ENCODE measurements at regions of chr7 and their contacts with region 1.

Region 1: GRCh38 chr7:38215735-38216670 is 38.0 kb downstream of the STARD3NL start:
- DNase-seq: peak; percentile 81
- ATAC-seq: peak; percentile 92
- H3K4me3 Mint-ChIP-seq: no peak overlapping the region
- H3K27ac Mint-ChIP-seq: peak overlapping the region; percentile 57
- H3K4me1 Mint-ChIP-seq: peaks cover 41% of the 10 kb centered on the region
- H3K27me3 Mint-ChIP-seq: no peaks in the 10 kb centered on the region; the same call in 1 of the 2 replicates
- CTCF ChIP-seq: peak; percentile 94

Region 2: GRCh38 chr7:37916673-37917660 is 299.0 kb before region 1 on chr7 and contains the start of gene SFRP4:
- CTCF ChIA-PET with region 1: interaction called, 19 read pairs
- POLR2A ChIA-PET with region 1: no interaction called
- DNase-seq: peak; percentile 64
- ATAC-seq: peak; percentile 42
- H3K4me3 Mint-ChIP-seq: peak within 1 kb of the TSS; percentile 78
- H3K27ac Mint-ChIP-seq: no peak within 1 kb of the TSS
- H3K4me1 Mint-ChIP-seq: peaks cover 16% of the 10 kb centered on the region
- H3K27me3 Mint-ChIP-seq: peaks cover 84% of the 10 kb centered on the region
- CTCF ChIP-seq: no peak
- total RNA-seq, gene SFRP4: 0.07 to 0.24 TPM (median 0.09 TPM) in 3 replicates

Region 3: DNA sequence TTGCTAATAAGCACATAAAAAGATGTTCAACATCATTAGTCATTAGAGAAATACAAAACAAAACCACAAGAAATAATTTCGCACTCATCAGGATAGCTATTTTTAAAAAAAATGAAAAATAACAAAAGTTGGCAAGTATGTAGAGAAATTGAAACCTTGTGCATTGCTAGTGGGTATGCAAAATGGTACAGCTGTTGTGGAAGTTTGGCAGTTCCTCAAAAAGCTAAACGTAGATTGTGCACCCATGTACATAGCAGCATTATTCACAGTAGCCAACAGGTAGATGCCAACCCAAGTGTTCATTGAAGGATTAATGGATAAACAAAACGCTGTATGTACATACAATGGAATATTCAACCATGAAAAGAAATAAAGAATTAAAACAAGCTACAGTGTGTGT is 73.3 kb before region 1 on chr7:
- CTCF ChIA-PET with region 1: no interaction called
- POLR2A ChIA-PET with region 1: no interaction called
- DNase-seq: no peak
- ATAC-seq: no peak
- H3K4me3 Mint-ChIP-seq: no peak overlapping the region
- H3K27ac Mint-ChIP-seq: no peak overlapping the region
- H3K4me1 Mint-ChIP-seq: peaks cover 5% of the 10 kb centered on the region; the same call in 1 of the 2 replicates
- H3K27me3 Mint-ChIP-seq: no peaks in the 10 kb centered on the region
- CTCF ChIP-seq: no peak

Region 4: DNA sequence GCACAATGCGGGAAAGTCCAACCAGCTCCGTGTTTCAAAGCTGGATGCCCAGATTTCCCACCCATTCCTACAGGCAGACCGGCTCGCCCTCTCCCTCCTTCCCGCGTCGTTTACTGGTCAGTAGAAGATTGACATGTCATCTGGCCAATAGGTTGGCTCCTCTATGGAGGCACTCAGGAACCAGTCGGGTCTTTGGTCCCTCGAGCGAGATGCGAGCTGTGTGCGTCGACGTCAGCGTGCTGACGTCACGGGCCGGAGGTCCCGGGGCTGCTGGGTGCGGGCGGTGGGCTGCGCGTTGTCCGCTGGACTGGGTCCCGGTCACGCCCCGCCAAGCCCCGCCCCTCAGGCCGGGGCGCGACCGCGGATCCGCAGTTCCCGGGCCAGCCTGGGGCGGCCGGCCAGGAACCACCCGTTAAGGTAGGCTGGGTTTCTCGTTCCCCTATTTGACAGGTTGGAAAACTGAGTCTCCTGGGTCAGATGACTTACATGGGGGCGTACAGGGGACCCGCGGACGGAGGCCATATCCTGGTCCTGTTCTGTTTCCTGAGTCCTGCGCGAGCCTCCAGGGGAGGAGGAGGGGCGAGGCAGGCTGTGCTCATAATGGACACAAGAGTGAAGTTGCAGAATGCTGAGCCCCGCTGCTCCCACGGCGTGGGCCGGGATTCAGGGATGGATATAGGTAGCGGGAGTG is 37.9 kb before region 1 on chr7 and contains the start of gene STARD3NL:
- CTCF ChIA-PET with region 1: interaction called, 19 read pairs
- POLR2A ChIA-PET with region 1: interaction called, 3 read pairs
- DNase-seq: peak; percentile 94
- ATAC-seq: peak; percentile 99
- H3K4me3 Mint-ChIP-seq: peak within 1 kb of the TSS; percentile 91
- H3K27ac Mint-ChIP-seq: peak within 1 kb of the TSS; percentile 98
- H3K4me1 Mint-ChIP-seq: peaks cover 18% of the 10 kb centered on the region
- H3K27me3 Mint-ChIP-seq: peaks cover 13% of the 10 kb centered on the region
- CTCF ChIP-seq: no peak
- total RNA-seq, gene STARD3NL: 30.6 to 33.1 TPM (median 32.2 TPM) in 3 replicates

Region 5: DNA sequence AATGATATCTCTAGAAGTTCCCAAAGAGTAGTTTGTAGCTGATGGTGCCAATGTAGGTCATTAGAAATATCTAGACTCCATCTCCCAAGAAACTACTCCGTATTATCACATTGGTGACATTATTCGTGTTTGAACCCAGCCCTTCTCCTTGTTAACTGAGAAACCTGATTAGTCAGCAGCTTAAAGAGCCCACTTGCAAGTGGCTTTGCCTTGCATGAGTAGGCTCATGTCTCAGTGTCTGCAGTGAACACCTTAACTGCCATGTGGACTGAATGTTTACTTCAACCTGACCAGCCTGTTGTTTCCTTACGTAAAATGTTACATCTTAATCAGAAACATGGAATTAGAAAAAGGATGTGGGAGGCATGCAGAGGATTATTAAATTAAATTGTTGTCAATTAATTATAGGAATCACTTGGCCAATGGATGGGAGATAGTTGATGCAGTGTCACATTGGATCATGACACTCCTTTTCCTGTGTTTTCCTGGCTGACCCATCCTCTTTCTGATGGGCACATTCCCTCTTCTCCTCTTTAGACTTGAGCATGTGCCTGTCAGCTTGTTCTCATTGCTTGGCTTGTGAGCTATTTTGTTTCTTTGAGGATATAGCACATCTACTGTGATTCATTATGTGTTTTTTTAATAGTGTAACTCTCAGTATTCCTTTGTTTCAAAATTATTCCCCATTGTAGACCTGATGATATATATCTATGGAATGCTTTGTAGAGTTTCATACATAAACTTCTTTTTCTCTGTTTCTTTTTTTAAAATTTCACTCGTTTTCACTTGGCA is 20.0 kb before region 1 on chr7:
- CTCF ChIA-PET with region 1: interaction called, 51 read pairs
- POLR2A ChIA-PET with region 1: no interaction called
- DNase-seq: no peak
- ATAC-seq: no peak
- H3K4me3 Mint-ChIP-seq: no peak overlapping the region
- H3K27ac Mint-ChIP-seq: no peak overlapping the region
- H3K4me1 Mint-ChIP-seq: peaks cover 40% of the 10 kb centered on the region
- H3K27me3 Mint-ChIP-seq: no peaks in the 10 kb centered on the region
- CTCF ChIP-seq: no peak

Region 6: GRCh38 chr7:38235606-38236005 is 19.6 kb after region 1 on chr7:
- CTCF ChIA-PET with region 1: interaction called, 10 read pairs
- POLR2A ChIA-PET with region 1: no interaction called
- DNase-seq: no peak
- ATAC-seq: no peak
- H3K4me3 Mint-ChIP-seq: no peak overlapping the region
- H3K27ac Mint-ChIP-seq: no peak overlapping the region
- H3K4me1 Mint-ChIP-seq: no peaks in the 10 kb centered on the region
- H3K27me3 Mint-ChIP-seq: no peaks in the 10 kb centered on the region
- CTCF ChIP-seq: no peak

Region 7: GRCh38 chr7:38369816-38370493 is 154.0 kb after region 1 on chr7:
- CTCF ChIA-PET with region 1: interaction called, 50 read pairs
- POLR2A ChIA-PET with region 1: no interaction called
- DNase-seq: peak; percentile 97
- ATAC-seq: peak; percentile 92
- H3K4me3 Mint-ChIP-seq: peak overlapping the region; percentile 10; the same call in 1 of the 2 replicates
- H3K27ac Mint-ChIP-seq: peak overlapping the region; percentile 24
- H3K4me1 Mint-ChIP-seq: peaks cover 17% of the 10 kb centered on the region
- H3K27me3 Mint-ChIP-seq: no peaks in the 10 kb centered on the region
- CTCF ChIP-seq: peak; percentile 77

Region 8: GRCh38 chr7:38502294-38502693 is 286.3 kb after region 1 on chr7:
- CTCF ChIA-PET with region 1: no interaction called
- POLR2A ChIA-PET with region 1: no interaction called
- DNase-seq: no peak
- ATAC-seq: peak; percentile 50; the same call in 1 of the 2 replicates
- H3K4me3 Mint-ChIP-seq: no peak overlapping the region
- H3K27ac Mint-ChIP-seq: no peak overlapping the region
- H3K4me1 Mint-ChIP-seq: no peaks in the 10 kb centered on the region
- H3K27me3 Mint-ChIP-seq: peaks cover 3% of the 10 kb centered on the region; the same call in 1 of the 2 replicates
- CTCF ChIP-seq: no peak

Measured in WTC11 (cell line).